Esophagus squamous epithelium (tissue), 5 donors: ENCODE measurements at regions of chr15 and their contacts with region 1.

Region 1: DNA sequence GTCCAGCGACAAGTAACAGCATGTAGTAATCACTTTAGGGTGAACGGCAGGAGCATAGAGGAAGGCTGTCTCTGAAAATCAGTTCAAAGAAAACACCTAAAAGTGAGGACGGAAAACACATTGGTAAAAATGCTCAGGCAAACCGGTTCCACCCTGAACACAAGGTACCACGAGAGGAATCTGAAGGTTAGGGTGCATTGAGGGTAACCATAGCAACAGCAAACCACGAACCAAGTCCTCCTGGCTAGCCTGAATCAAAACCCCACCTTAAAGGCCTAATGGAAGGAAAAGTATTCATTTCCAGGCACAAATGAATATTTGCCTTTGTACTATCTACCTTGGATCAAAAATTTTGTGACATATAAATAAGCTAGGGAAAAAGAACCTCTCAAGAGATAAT is 315.0 kb downstream of the OCA2 start:
- DNase-seq: no peak
- H3K4me3 ChIP-seq: no peak overlapping the region
- H3K27ac ChIP-seq: no peak overlapping the region
- H3K4me1 ChIP-seq: no peaks in the 10 kb centered on the region
- H3K27me3 ChIP-seq: no peaks in the 10 kb centered on the region
- CTCF ChIP-seq: no peak
- POLR2A ChIP-seq: no peak

Region 2: GRCh38 chr15:27723821-27724220 is 60.3 kb before region 1 on chr15:
- intact Hi-C with region 1: no loop called
- DNase-seq: no peak
- H3K4me3 ChIP-seq: no peak overlapping the region
- H3K27ac ChIP-seq: no peak overlapping the region
- H3K4me1 ChIP-seq: no peaks in the 10 kb centered on the region
- H3K27me3 ChIP-seq: no peaks in the 10 kb centered on the region
- CTCF ChIP-seq: no peak
- POLR2A ChIP-seq: no peak

Region 3: GRCh38 chr15:27820232-27820631 is 36.1 kb after region 1 on chr15:
- intact Hi-C with region 1: loop called (anchors 5 kb)
- DNase-seq: no peak
- H3K4me3 ChIP-seq: no peak overlapping the region
- H3K27ac ChIP-seq: no peak overlapping the region
- H3K4me1 ChIP-seq: no peaks in the 10 kb centered on the region
- H3K27me3 ChIP-seq: no peaks in the 10 kb centered on the region
- CTCF ChIP-seq: no peak
- POLR2A ChIP-seq: no peak

Region 4: DNA sequence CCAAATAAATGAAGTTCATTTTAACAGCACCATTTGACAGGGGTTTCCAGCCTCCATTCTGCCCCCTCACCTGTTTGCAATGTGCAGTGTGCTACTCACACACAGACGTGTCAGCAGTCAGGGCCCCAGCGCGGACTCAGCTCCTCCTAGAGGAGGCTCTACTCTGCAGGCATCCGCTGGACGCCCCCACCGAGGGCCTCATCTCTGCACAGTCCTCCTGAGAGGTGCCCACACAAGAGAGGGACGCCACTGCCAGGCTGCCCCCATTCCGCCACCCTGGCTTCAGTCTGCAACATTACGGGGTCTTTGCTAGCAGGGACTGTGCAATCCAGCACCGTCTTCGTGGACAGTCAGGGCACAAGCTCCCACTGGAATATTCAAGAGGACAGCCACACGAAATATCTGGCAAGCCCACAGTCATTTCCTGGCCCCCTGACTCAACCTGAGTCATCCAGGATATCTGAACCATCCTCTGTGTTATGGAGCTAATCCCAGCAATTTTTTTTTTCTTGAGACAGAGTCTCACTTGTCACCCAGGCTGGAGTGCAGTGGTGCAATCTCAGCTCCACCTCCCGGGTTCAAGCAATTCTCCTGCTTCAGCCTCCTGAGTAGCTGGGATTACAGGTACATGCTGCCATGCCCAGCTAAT is 60.0 kb after region 1 on chr15:
- intact Hi-C with region 1: loop called (anchors 10 kb)
- DNase-seq: no peak
- H3K4me3 ChIP-seq: no peak overlapping the region
- H3K27ac ChIP-seq: no peak overlapping the region
- H3K4me1 ChIP-seq: no peaks in the 10 kb centered on the region
- H3K27me3 ChIP-seq: no peaks in the 10 kb centered on the region
- CTCF ChIP-seq: no peak
- POLR2A ChIP-seq: no peak